ENCODE measurements at regions of chr20 and their contacts with region 1.

Region 1: GRCh38 chr20:41136680-41137613 is at the start of gene PLCG1:
- DNase-seq: peak; percentile 78 to 90
- ATAC-seq: peak; percentile 69 to 83 (median 75)
- H3K4me3 ChIP-seq: peak within 1 kb of the TSS; percentile 54
- H3K4me3 Mint-ChIP-seq: peak within 1 kb of the TSS; percentile 92
- H3K27ac ChIP-seq: peak within 1 kb of the TSS; percentile 68
- H3K27ac Mint-ChIP-seq: peak within 1 kb of the TSS; percentile 93 to 94
- H3K4me1 ChIP-seq: peaks cover 60% of the 10 kb centered on the region
- H3K4me1 Mint-ChIP-seq: peaks cover 56 to 60% of the 10 kb centered on the region in 2 donors
- H3K27me3 ChIP-seq: no peaks in the 10 kb centered on the region
- H3K27me3 Mint-ChIP-seq: no peaks in the 10 kb centered on the region
- CTCF ChIP-seq: no peak
- total RNA-seq, gene PLCG1: 199 to 242 (median 236) TPM

Region 2: DNA sequence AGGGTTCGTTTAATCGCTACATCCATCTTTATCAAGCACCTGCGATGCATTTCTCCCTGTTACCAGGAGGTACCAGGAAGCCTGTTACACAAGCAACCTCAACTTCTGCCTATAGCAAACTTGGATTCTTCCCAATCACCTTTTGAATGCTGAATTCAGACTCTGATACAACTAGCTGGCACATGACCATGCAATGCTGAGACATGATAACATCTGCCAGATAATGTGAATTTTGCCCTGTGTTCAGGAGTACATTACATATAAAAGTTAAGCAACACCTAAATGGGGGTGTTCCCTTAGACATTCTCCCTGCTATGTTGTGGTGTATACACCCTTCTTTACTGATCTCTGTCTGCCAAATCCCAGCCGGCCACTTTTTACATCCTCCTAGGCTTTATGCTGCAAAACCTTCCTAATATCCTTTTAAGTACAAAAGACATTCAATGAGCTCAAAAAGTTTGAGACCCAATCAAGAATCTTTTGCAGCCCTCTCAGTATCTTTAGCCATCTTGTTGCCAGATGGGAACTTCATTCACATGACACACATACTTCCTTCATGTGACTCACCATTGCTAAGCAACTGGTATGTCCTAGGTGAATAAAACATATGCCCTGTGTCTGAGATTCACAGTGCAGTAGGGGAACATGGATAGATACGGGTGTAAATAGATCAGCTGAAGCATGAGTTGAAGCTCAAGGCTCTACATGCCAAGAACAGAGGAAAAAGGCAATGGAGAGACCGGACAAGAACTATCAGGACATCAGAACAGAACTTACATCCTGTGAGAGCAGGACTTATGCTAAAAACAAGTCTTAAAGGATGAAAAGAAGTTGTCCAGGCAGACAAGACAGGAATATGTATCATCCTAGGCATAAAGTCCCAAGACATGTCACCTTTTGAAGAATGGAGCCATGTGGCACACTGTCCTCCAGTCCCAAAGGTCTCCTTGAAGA is 96.3 kb after region 1 on chr20:
- intact Hi-C with region 1: loop called (anchors 1 kb)
- DNase-seq: no peak
- ATAC-seq: no peak
- H3K4me3 ChIP-seq: no peak overlapping the region
- H3K4me3 Mint-ChIP-seq: no peak overlapping the region
- H3K27ac ChIP-seq: no peak overlapping the region
- H3K27ac Mint-ChIP-seq: no peak overlapping the region
- H3K4me1 ChIP-seq: peaks cover 4% of the 10 kb centered on the region
- H3K4me1 Mint-ChIP-seq: peaks cover 7 to 11% of the 10 kb centered on the region in 2 donors
- H3K27me3 ChIP-seq: no peaks in the 10 kb centered on the region
- H3K27me3 Mint-ChIP-seq: no peaks in the 10 kb centered on the region
- CTCF ChIP-seq: no peak

Region 3: DNA sequence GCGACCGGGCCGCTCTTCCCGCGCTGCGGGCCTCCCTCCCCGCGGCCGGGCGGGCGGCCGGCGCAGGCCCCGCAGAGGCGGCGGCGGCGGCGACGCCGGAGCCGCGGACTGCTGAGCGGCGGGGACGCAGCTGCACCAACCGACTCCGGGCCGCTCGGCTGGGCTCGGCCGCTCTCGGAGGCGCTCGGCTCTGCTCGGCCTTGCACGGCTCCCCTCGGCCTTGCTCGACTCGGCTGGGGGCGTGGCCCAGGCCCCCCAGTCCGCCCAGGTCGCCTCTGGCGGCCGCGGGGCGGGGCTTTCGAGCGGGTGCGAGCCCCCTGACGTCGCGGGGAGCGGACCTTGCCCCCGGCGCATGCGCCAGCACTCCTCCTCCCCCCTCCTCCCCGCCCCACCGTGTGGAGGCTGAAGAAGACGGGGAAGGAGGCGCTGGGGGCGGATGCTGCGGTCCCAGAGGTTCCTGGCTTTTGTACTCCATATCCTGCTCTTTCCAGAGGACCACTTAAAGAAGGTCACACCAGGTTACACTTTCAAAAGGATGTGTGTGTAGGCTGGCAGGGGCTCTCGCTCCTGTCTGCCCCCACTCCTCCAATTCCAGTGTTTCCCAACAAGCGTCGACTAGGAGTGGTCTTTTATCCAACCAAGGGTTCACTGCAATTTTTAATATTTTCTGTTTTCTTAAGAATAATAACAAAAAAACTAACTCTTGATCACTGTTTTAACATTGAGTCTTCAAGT is 180.8 kb after region 1 on chr20 and contains the start of gene ZHX3:
- intact Hi-C with region 1: loop called (anchors 5 kb)
- DNase-seq: peak; percentile 97 to 98
- ATAC-seq: peak; percentile 96 to 100 (median 96)
- H3K4me3 ChIP-seq: peak within 1 kb of the TSS; percentile 47
- H3K4me3 Mint-ChIP-seq: peak within 1 kb of the TSS; percentile 87
- H3K27ac ChIP-seq: peak within 1 kb of the TSS; percentile 66
- H3K27ac Mint-ChIP-seq: peak within 1 kb of the TSS; percentile 70 to 85
- H3K4me1 ChIP-seq: peaks cover 11% of the 10 kb centered on the region
- H3K4me1 Mint-ChIP-seq: peaks cover 13 to 19% of the 10 kb centered on the region in 2 donors
- H3K27me3 ChIP-seq: no peaks in the 10 kb centered on the region
- H3K27me3 Mint-ChIP-seq: peaks cover 0 to 3% of the 10 kb centered on the region in 2 donors
- CTCF ChIP-seq: no peak
- total RNA-seq, gene ZHX3: 9.0 to 11.8 (median 10.3) TPM

Region 4: GRCh38 chr20:41339507-41340326 is 202.8 kb after region 1 on chr20:
- intact Hi-C with region 1: loop called (anchors 1 kb)
- DNase-seq: peak; percentile 81 to 90
- ATAC-seq: peak; percentile 89 to 97 (median 95)
- H3K4me3 ChIP-seq: peak overlapping the region; percentile 15
- H3K4me3 Mint-ChIP-seq: peak overlapping the region; percentile 87
- H3K27ac ChIP-seq: no peak overlapping the region
- H3K27ac Mint-ChIP-seq: peak overlapping the region in 1 of 2 donors; percentile 82
- H3K4me1 ChIP-seq: peaks cover 13% of the 10 kb centered on the region
- H3K4me1 Mint-ChIP-seq: peaks cover 11% of the 10 kb centered on the region in 2 donors
- H3K27me3 ChIP-seq: peaks cover 7% of the 10 kb centered on the region
- H3K27me3 Mint-ChIP-seq: peaks cover 11 to 19% of the 10 kb centered on the region in 2 donors
- CTCF ChIP-seq: peak; percentile 99

Region 5: GRCh38 chr20:41357424-41358163 is 220.6 kb after region 1 on chr20:
- intact Hi-C with region 1: no loop called
- DNase-seq: no peak
- ATAC-seq: no peak
- H3K4me3 ChIP-seq: no peak overlapping the region
- H3K4me3 Mint-ChIP-seq: no peak overlapping the region
- H3K27ac ChIP-seq: no peak overlapping the region
- H3K27ac Mint-ChIP-seq: no peak overlapping the region
- H3K4me1 ChIP-seq: no peaks in the 10 kb centered on the region
- H3K4me1 Mint-ChIP-seq: no peaks in the 10 kb centered on the region
- H3K27me3 ChIP-seq: no peaks in the 10 kb centered on the region
- H3K27me3 Mint-ChIP-seq: no peaks in the 10 kb centered on the region
- CTCF ChIP-seq: no peak

Measured in natural killer cell (primary cell).